ENCODE measurements at regions of chr15 and their contacts with region 1.

Region 1: DNA sequence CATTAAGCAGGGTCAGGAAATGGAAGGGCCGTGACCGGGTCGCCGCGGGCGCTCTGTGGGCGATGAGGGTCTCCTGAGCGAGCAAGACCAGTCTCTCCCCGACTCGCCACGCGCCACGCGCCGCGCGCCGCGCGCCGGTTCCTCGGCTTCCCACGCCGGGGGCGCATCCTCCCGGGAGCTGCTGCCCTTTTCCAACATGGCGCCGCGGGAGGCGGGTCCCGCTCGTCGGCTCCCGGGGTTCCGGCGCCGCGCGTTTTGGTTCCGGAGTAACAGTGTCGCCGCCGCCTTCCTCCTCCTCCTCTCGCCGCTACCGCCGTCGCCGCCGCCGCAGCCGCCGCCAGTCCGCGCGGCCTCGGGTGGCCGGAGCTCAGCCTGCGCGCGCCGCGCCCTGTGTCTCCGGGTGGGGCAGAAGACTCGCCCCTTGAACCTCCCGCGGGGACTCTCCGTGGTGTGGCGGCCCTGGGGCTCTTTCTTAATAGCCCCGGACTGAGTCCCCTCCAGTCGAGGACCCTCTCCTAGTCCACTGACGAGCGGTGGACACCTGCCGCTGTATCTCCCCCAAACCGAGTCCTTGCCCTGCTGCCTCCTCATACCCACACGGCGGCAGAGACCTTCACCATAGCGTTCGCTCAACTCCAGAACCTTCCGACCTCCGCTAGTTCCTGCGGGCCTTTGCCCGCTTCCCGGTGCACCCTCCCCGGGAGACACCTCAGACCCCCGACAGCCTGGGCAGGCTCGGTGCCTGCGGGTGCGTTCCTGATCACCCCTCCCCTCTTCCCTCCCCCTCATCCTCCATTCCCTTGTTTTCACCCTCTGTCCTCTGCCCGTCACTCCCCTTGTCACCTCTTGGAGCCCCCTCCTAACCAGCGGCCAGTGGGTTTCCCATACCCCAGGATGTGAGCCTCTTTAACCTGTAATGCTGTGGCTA is at the start of gene MAP2K5:
- DNase-seq: no peak
- H3K4me3 ChIP-seq: peak within 1 kb of the TSS; percentile 78 to 80
- H3K27ac ChIP-seq: peak within 1 kb of the TSS; percentile 82
- H3K4me1 ChIP-seq: peaks cover 29% of the 10 kb centered on the region
- H3K27me3 ChIP-seq: no peaks in the 10 kb centered on the region
- CTCF ChIP-seq: no peak
- POLR2A ChIP-seq: peak in 1 of 2 donors; percentile 32
- total RNA-seq, gene MAP2K5: 13.5 TPM

Region 2: GRCh38 chr15:67433495-67434099 is 109.1 kb before region 1 on chr15:
- intact Hi-C with region 1: no loop called
- DNase-seq: no peak
- H3K4me3 ChIP-seq: no peak overlapping the region
- H3K27ac ChIP-seq: no peak overlapping the region
- H3K4me1 ChIP-seq: no peaks in the 10 kb centered on the region
- H3K27me3 ChIP-seq: no peaks in the 10 kb centered on the region
- CTCF ChIP-seq: peak; percentile 6 to 53 (median 23)
- POLR2A ChIP-seq: no peak

Region 3: GRCh38 chr15:67839929-67840748 is 297.5 kb after region 1 on chr15 and contains the start of gene RNU6-1:
- intact Hi-C with region 1: loop called (anchors 5 kb)
- DNase-seq: peak in 1 of 2 donors; percentile 94
- H3K4me3 ChIP-seq: peak within 1 kb of the TSS; percentile 84 to 91
- H3K27ac ChIP-seq: peak within 1 kb of the TSS; percentile 99
- H3K4me1 ChIP-seq: peaks cover 34% of the 10 kb centered on the region
- H3K27me3 ChIP-seq: no peaks in the 10 kb centered on the region
- CTCF ChIP-seq: peak in 1 of 3 experiments; percentile 22
- POLR2A ChIP-seq: peak in 1 of 2 donors; percentile 92
- total RNA-seq, gene RNU6-1: not detected